ENCODE measurements at regions of chr5 and their contacts with region 1.

Region 1: DNA sequence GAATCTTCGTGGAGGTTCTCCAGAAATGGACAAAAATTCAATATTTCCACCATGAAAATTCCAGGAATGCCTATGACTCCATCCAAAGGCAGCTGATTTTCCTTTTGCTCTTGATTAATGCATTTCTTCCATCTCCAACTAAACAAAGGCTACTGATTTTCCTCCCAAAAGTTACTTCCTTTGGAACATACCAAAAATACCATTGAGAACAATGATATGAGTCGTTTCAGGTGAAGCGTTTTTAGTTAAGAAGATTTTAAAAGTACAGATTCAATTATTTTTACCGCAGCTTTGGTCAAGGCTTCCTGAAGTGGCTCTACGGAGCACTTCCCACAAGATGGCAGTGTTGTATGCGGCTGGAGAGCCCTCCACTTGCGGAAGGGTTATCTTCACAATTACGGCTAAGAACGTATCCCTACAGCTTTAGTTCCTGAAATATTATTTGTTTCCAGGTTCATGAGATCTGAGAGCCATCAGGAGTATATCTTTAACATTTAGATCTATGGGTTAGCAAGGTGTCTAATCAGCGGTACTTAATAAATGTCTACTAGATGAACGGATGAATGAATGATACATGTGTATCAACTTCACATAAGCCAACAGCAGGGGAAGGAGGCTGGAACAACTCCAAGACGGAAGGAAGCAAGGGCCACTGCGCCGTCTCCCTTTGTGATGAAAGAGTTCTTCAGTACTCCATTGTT is 35.9 kb upstream of the ARSB start:
- DNase-seq: peak in 3 of 4 donors; percentile 47 to 73 (median 61)
- ATAC-seq: peak; percentile 94
- H3K4me3 ChIP-seq: no peak overlapping the region
- H3K27ac ChIP-seq: no peak overlapping the region
- H3K4me1 ChIP-seq: peaks cover 0 to 3% of the 10 kb centered on the region in 2 donors
- H3K27me3 ChIP-seq: peaks cover 0 to 6% of the 10 kb centered on the region in 2 donors
- CTCF ChIP-seq: peak; percentile 55 to 60

Region 2: DNA sequence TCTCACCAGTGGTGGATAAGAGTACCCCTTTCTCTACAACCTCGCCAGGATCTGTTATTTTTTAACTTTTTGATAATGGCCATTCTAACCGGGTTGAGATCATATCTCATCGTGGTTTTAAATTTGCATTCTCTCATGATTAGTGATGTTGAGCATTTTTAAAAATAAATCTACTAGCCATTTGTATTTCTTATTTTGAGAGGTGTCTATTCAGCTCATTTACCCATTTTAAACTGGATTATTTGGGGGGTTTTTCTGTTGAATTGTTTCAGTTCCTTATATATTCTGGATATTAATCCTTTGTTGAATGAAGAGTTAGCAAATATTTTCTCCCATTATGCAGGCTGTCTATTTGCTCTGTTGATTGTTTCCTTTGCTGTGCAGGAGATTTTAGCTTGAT is 175.5 kb before region 1 on chr5:
- intact Hi-C with region 1: no loop called
- DNase-seq: no peak
- ATAC-seq: no peak
- H3K4me3 ChIP-seq: no peak overlapping the region
- H3K27ac ChIP-seq: no peak overlapping the region
- H3K4me1 ChIP-seq: no peaks in the 10 kb centered on the region
- H3K27me3 ChIP-seq: no peaks in the 10 kb centered on the region
- CTCF ChIP-seq: no peak

Region 3: DNA sequence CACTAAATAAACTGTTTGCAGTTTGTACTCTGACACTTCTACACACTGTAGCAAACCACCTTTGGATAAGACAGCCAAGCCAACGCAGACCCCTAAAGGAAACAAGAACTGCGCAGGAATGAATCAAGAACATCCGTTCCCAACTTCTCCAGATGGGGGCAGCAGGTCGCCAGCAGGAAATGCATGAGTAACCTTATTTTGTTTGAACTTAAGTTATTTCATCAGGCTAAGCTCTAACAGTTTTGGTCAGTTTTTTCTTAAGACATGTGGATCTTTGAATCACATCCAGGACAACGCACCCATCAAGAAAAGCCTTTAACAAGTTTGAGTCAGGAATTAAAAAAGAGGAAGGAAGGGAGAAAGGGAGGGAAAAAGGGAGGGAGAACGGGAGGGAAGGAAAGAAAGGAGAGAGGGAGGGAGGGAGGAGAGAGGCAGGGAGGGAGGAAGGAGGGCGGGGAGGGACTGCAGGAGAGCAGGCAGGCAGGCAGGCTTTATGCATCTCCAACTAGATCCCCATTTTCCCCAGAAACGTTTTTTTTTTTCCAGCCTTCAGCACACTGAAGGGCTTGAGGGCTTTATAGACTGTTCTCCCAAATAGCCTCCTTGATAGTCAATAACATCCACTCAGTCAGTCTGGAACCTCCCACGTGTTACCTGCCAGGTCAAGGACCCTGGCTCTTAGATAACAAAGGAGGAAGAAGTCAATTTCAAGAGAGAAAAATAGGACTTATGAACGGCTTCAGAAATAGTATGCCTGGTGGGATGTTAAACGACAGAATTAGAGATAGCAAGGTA is 112.8 kb after region 1 on chr5:
- intact Hi-C with region 1: loop called in 1 of 2 experiments (anchors 5 kb)
- DNase-seq: peak in 3 of 4 donors; percentile 45 to 79 (median 71)
- ATAC-seq: peak; percentile 95
- H3K4me3 ChIP-seq: peak overlapping the region in 1 of 2 donors; percentile 7
- H3K27ac ChIP-seq: peak overlapping the region in 1 of 2 donors; percentile 18
- H3K4me1 ChIP-seq: peaks cover 5 to 10% of the 10 kb centered on the region in 2 donors
- H3K27me3 ChIP-seq: no peaks in the 10 kb centered on the region
- CTCF ChIP-seq: peak in 1 of 2 donors; percentile 68

Region 4: GRCh38 chr5:79456890-79457583 is 436.0 kb after region 1 on chr5:
- intact Hi-C with region 1: loop called in 1 of 2 experiments (anchors 10 kb)
- DNase-seq: no peak
- ATAC-seq: no peak
- H3K4me3 ChIP-seq: no peak overlapping the region
- H3K27ac ChIP-seq: no peak overlapping the region
- H3K4me1 ChIP-seq: no peaks in the 10 kb centered on the region
- H3K27me3 ChIP-seq: no peaks in the 10 kb centered on the region
- CTCF ChIP-seq: no peak